MCF 10A (cell line): ENCODE measurements at regions of chr4 and their contacts with region 1.

Region 1: GRCh38 chr4:22897520-22898108 is 204.9 kb downstream of the GBA3 start:
- DNase-seq: peak; percentile 53
- H3K4me3 Mint-ChIP-seq: no peak overlapping the region
- H3K27ac Mint-ChIP-seq: no peak overlapping the region
- H3K4me1 Mint-ChIP-seq: no peaks in the 10 kb centered on the region
- H3K27me3 Mint-ChIP-seq: no peaks in the 10 kb centered on the region
- CTCF ChIP-seq: peak; percentile 62

Region 2: DNA sequence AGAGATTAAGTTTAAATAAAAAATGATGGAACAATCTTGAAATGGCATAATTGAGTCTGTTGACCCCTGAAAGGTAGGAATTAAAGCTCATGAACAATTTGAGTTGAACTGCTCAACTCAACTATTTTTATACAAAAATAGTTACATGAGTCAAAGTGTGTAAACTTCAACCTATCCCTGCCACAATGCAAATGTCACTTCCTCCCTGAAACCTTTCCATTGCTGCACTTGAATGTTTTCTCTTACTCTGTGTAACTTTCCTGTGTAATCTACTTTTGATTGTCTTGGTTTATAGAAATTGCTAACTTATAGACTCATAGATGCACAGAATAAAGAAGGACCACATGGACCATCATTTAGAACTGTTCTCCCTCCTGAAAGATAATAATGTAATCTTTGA is 13.7 kb after region 1 on chr4:
- CTCF ChIA-PET with region 1: interaction called, 17 read pairs
- POLR2A ChIA-PET with region 1: no interaction called
- intact Hi-C with region 1: no loop called
- DNase-seq: no peak
- H3K4me3 Mint-ChIP-seq: no peak overlapping the region
- H3K27ac Mint-ChIP-seq: no peak overlapping the region
- H3K4me1 Mint-ChIP-seq: no peaks in the 10 kb centered on the region
- H3K27me3 Mint-ChIP-seq: no peaks in the 10 kb centered on the region
- CTCF ChIP-seq: no peak

Region 3: GRCh38 chr4:22921936-22922335 is 24.3 kb after region 1 on chr4:
- CTCF ChIA-PET with region 1: interaction called, 17 read pairs
- POLR2A ChIA-PET with region 1: no interaction called
- intact Hi-C with region 1: no loop called
- DNase-seq: no peak
- H3K4me3 Mint-ChIP-seq: no peak overlapping the region
- H3K27ac Mint-ChIP-seq: no peak overlapping the region
- H3K4me1 Mint-ChIP-seq: no peaks in the 10 kb centered on the region
- H3K27me3 Mint-ChIP-seq: no peaks in the 10 kb centered on the region
- CTCF ChIP-seq: no peak

Region 4: GRCh38 chr4:23130845-23131244 is 233.2 kb after region 1 on chr4:
- CTCF ChIA-PET with region 1: interaction called, 6 read pairs
- POLR2A ChIA-PET with region 1: no interaction called
- intact Hi-C with region 1: loop called (anchors 2 kb)
- DNase-seq: peak; percentile 14
- H3K4me3 Mint-ChIP-seq: no peak overlapping the region
- H3K27ac Mint-ChIP-seq: no peak overlapping the region
- H3K4me1 Mint-ChIP-seq: no peaks in the 10 kb centered on the region
- H3K27me3 Mint-ChIP-seq: no peaks in the 10 kb centered on the region
- CTCF ChIP-seq: no peak

Region 5: DNA sequence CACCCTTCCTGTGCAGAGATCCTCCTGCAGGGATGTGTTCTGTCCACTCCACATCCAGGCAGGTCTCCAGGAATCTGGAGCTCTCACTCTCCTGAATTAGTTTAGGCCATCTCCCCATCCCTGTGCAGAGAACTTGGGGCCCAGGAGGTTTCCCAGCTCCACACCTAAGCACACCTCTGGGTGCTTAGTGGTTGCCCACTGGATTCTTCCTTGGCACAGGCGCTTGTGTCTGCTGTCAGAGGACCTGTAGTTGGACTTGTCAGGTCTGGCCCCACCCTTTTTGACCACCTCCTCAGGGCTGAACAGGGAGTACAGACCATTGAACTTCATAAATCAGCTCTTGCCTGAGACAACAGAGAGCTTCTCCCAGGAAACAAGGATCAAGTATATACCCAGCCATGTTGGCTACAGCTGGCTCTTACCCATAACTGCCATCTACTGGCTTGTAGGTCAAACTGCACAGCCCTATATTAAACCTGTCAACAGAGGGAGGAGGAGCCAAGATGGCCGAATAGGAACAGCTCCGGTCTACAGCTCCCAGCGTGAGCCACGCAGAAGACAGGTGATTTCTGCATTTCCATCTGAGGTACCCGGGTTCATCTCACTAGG is 716.8 kb after region 1 on chr4:
- CTCF ChIA-PET with region 1: interaction called, 3 read pairs
- POLR2A ChIA-PET with region 1: no interaction called
- intact Hi-C with region 1: loop called (anchors 5 kb)
- DNase-seq: peak; percentile 45
- H3K4me3 Mint-ChIP-seq: no peak overlapping the region
- H3K27ac Mint-ChIP-seq: no peak overlapping the region
- H3K4me1 Mint-ChIP-seq: no peaks in the 10 kb centered on the region
- H3K27me3 Mint-ChIP-seq: no peaks in the 10 kb centered on the region
- CTCF ChIP-seq: peak; percentile 20